ENCODE measurements at regions of chr20 and their contacts with region 1.

Region 1: DNA sequence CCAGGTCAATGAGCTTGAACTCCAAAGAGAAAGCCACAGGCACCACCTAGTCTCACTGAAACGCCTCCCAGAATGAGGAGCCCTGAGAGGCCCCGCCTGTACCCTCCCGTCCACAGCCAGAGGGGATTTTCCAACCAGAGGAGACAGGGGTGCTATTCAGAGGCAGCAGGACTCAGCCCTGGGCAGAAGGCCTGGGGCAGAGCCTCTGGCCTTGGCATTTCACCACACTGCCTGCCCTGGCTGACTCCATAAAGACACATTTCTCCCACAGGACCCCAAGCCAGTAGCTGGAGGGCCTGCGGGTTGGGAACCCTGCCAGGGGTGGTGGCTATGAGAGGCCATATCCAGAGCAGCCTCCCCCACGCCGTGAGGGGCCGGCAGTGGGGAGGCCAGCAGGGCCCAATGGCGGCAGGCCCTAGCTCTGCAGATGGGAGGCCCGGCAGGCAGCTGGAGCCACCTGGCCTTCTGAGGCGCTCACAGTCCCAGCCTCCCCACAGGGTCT is 159.3 kb downstream of the PREX1 start:
- DNase-seq: peak in 5 of 10 donors; percentile 41 to 73 (median 67)
- H3K4me3 ChIP-seq: no peak overlapping the region
- H3K27ac ChIP-seq: peak overlapping the region; percentile 42 to 94 (median 85)
- H3K27me3 ChIP-seq: no peaks in the 10 kb centered on the region
- CTCF ChIP-seq: peak in 6 of 56 donors; percentile 12 to 26 (median 19)

Region 2: DNA sequence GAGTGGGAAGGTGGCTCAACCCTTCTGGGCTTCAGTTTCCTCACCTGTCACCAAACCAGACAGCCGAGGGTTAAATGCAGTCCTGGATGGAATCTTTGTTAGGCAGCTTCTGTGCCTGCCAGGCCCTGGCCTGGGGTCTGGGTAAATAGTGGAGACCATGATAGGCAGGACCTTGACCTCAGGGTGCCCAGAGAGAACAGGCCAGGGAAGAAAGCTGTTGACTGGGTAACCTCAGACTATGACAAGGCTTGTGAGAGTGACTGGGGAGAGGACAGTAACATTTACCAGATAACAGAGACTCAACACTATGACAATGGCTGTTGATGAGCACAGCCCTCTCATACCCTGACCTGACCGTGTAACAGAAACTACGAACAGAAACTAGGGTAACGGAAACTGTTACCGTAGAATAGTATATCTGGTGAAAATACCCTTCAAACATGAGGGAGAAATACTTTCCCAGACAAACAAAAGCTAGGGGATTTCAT is 59.0 kb before region 1 on chr20:
- intact Hi-C with region 1: no loop called
- DNase-seq: peak in 4 of 10 donors; percentile 6 to 26 (median 14)
- H3K4me3 ChIP-seq: no peak overlapping the region
- H3K27ac ChIP-seq: no peak overlapping the region
- H3K27me3 ChIP-seq: no peaks in the 10 kb centered on the region
- CTCF ChIP-seq: no peak

Region 3: DNA sequence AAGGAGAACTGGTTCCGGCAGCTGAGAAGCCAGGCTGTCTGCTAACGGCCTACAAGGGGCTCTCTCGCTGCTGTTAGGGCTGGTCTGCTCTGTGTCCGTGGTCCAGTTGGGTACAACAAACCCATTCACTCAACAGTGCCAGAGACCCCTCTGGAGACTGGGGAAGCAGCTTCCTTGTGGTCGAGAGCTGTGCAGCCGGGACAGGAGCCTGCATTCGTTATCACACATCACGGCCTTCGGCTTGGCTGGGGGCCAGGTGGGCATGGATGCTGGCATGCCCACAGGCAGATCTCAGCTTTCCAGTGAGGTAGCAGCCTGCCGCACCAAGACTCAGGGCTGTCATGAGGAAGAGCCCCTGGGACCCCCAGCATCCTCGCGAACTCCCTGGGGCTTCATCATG is 34.6 kb after region 1 on chr20:
- intact Hi-C with region 1: loop called in 1 of 2 experiments (anchors 5 kb)
- DNase-seq: peak in 7 of 10 donors; percentile 42 to 71 (median 60)
- H3K4me3 ChIP-seq: peak overlapping the region in 3 of 59 donors; percentile 5 to 16 (median 8)
- H3K27ac ChIP-seq: peak overlapping the region; percentile 41 to 100 (median 84)
- H3K27me3 ChIP-seq: no peaks in the 10 kb centered on the region
- CTCF ChIP-seq: no peak

Region 4: GRCh38 chr20:49344975-49345374 is 676.5 kb after region 1 on chr20:
- intact Hi-C with region 1: loop called in 1 of 2 experiments (anchors 5 kb)
- DNase-seq: peak in 7 of 10 donors; percentile 47 to 86 (median 71)
- H3K4me3 ChIP-seq: peak overlapping the region in 3 of 59 donors; percentile 1 to 10 (median 10)
- H3K27ac ChIP-seq: peak overlapping the region in 56 of 59 donors; percentile 14 to 93 (median 82)
- H3K27me3 ChIP-seq: no peaks in the 10 kb centered on the region
- CTCF ChIP-seq: no peak

Measured in dorsolateral prefrontal cortex (tissue), 120 donors.